Activated CD4-positive, alpha-beta memory T cell treated with anti-CD3 and anti-CD28 coated beads for 36 hours (primary cell): ENCODE measurements at regions of chr3 and their contacts with region 1.

Region 1: GRCh38 chr3:12891985-12892839 is 50.8 kb upstream of the RPL32 start:
- DNase-seq: peak; percentile 63
- H3K4me3 Mint-ChIP-seq: no peak overlapping the region
- H3K27ac Mint-ChIP-seq: no peak overlapping the region
- H3K4me1 Mint-ChIP-seq: peaks cover 12% of the 10 kb centered on the region
- H3K27me3 Mint-ChIP-seq: peaks cover 10% of the 10 kb centered on the region

Region 2: GRCh38 chr3:12706504-12707253 is 185.5 kb before region 1 on chr3:
- CTCF ChIA-PET with region 1: interaction called, 4 read pairs
- POLR2A ChIA-PET with region 1: no interaction called
- intact Hi-C with region 1: loop called (anchors 5 kb)
- DNase-seq: peak; percentile 75
- H3K4me3 Mint-ChIP-seq: no peak overlapping the region
- H3K27ac Mint-ChIP-seq: no peak overlapping the region
- H3K4me1 Mint-ChIP-seq: no peaks in the 10 kb centered on the region
- H3K27me3 Mint-ChIP-seq: no peaks in the 10 kb centered on the region

Region 3: DNA sequence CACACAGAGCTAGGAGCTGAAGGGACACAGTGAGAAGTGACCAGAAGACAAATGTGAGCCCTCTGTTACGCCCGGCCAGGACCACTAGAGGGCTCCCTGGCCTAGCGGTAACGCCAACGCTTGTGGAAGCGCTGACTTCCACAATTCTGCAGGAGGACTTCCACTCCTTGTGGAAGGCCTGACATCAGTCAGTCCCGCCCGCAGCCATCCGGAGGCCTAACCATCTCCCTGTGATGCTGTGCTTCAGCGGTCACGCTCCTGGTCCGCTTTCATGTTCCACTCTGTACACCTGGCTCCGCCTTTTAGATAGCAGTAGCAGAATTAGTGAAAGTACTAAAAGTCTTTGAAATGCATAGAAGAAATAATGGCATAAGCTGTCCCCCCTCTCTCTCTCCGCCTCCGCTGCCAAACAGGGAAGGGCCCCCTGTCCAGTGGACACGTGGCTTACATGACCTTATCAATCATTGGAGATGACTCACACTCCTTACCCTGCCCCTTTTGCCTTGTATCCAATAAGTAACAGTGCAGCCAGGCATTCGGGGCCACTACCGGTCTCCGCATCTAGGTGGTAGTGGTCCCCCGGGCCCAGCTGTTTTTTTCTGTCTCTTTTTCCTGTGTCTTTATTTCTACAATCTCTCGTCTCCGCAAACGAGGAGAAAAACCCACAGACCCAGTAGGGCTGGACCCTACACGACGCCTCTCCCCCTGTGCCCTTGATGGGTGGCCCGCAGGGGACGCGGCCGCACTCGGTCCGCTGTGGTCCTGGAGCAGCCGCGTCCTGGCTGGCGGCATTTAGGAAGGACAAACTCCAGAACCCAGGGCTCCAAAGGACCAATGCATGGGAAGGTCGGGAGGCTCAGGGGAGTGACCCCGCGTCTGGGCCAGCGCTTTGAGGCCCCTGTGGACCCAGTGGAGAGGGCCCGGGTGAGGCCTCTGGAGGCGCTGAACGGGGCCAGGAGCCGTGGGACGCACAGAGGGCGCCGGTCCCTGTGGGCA is 23.9 kb before region 1 on chr3:
- CTCF ChIA-PET with region 1: interaction called, 28 read pairs
- POLR2A ChIA-PET with region 1: no interaction called
- intact Hi-C with region 1: loop called (anchors 1 kb)
- DNase-seq: peak; percentile 78
- H3K4me3 Mint-ChIP-seq: peak overlapping the region; percentile 72
- H3K27ac Mint-ChIP-seq: no peak overlapping the region
- H3K4me1 Mint-ChIP-seq: peaks cover 13% of the 10 kb centered on the region
- H3K27me3 Mint-ChIP-seq: peaks cover 19% of the 10 kb centered on the region

Region 4: GRCh38 chr3:12934431-12934830 is 42.2 kb after region 1 on chr3:
- CTCF ChIA-PET with region 1: no interaction called
- POLR2A ChIA-PET with region 1: no interaction called
- intact Hi-C with region 1: no loop called
- DNase-seq: no peak
- H3K4me3 Mint-ChIP-seq: no peak overlapping the region
- H3K27ac Mint-ChIP-seq: no peak overlapping the region
- H3K4me1 Mint-ChIP-seq: peaks cover 7% of the 10 kb centered on the region
- H3K27me3 Mint-ChIP-seq: no peaks in the 10 kb centered on the region

Region 5: DNA sequence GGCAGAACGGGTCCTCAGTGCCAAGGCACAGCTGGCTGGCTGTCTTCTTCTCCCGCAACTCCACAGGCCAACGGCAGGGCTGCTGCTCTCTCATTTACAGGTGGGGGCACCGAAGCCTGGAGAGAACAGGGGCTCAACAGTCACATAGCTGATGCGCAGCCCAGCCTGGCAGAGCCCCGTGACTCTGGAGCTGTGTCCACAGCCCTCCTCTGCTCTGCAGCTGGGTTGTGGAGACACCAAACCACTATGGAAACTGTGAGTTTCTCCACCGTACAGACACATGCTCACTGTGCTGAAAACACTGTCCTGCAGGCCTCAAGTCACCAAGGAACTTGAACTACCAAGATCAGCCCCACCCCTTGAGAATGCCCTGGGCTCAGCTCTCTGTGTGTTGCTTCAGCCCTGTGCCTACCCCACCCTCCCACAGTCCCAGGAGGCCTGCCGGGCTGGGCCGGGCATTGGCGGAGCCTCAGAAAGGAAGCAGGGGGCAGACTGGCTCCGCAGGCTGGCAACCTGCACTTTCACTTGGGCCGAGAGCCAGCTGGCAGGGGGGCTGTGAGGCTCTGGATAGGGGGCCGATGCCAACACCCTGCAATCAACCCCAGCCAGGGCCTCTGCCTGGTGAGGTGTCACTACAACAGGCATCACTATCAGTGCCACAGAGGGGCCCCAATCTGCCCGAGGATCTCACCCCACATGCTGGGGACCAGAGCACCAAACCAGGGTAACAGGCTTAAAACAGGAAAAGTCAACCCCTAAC is 62.9 kb after region 1 on chr3:
- CTCF ChIA-PET with region 1: no interaction called
- POLR2A ChIA-PET with region 1: no interaction called
- intact Hi-C with region 1: no loop called
- DNase-seq: peak; percentile 28
- H3K4me3 Mint-ChIP-seq: no peak overlapping the region
- H3K27ac Mint-ChIP-seq: peak overlapping the region; percentile 33
- H3K4me1 Mint-ChIP-seq: peaks cover 66% of the 10 kb centered on the region
- H3K27me3 Mint-ChIP-seq: no peaks in the 10 kb centered on the region